ENCODE measurements at regions of chr1 and their contacts with region 1.

Region 1: GRCh38 chr1:54488779-54489626 is 59.0 kb upstream of the ACOT11 start:
- DNase-seq: peak; percentile 90

Region 2: DNA sequence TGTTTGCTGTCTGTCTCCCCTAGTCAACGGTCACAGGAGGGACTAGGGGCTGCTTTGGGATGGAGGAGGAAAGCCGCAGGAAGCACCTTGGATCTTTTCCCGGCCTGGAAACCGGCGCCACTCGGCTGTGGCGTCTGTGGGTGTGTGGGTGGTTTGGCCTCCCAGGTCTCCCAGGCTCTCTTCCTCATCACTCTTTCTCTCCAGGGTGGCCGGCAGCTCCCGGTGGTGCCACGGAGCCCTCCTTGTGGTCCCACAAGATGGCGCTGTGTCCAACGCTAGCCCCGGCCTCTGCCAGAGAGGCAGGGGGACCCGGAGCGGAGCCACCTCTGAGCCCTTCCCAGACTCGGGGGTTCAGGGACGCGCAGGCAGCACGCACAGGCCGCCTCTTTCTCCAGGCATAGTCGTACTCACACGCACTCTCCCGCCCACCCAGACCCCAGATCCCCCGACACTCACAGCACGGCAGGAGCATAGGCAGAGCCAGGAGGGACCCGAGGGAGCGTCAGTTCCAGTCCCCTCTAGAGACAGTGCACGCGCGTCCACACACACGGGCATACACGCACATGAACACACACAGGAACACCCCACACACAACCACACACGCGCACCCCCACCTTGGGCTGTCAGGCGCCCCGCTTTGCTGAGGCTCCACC is 367.4 kb before region 1 on chr1:
- intact Hi-C with region 1: loop called (anchors 1 kb)
- DNase-seq: no peak

Region 3: DNA sequence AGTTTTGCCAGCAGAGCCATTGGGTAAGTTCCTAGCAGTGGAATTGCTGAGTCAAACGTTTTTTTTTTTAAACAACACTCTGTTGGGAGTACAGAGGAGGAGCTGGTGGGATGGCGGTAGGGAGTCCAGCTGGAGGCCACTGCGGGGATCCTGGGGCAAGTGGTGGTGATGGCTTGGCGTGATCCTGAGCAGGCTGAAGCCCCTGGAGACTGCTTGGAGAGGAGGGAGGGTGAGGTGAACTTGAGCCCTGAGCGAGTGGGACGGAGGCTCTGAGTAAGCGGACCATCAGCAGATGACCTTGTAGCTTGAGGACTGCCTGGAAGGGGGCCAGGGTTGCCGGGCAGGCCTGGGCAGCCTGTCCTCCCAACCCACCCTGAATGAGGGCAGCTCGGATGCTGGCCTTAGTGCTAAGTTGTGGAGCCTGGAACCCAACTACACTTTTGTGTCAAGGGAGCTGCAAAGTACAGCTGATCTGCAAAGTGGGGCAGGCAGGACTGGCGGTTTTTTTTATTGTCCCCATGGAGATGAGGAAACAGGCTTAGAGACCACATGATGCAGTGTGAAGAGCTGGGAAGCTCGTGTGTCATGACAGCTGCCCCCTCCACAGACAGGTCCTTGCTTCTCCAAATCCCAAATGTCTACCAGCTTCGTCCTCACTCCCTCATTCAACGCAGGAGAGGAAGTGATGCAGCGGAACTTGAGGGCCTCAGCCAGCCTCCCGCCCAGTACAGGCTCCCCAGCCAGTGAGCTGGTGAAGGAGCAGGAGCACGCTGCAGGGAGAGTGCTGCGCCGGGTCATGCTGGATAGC is 268.8 kb before region 1 on chr1:
- intact Hi-C with region 1: loop called (anchors 1 kb)
- DNase-seq: peak; percentile 82

Region 4: GRCh38 chr1:54287176-54287650 is 201.8 kb before region 1 on chr1:
- intact Hi-C with region 1: loop called (anchors 5 kb)
- DNase-seq: peak; percentile 83

Region 5: DNA sequence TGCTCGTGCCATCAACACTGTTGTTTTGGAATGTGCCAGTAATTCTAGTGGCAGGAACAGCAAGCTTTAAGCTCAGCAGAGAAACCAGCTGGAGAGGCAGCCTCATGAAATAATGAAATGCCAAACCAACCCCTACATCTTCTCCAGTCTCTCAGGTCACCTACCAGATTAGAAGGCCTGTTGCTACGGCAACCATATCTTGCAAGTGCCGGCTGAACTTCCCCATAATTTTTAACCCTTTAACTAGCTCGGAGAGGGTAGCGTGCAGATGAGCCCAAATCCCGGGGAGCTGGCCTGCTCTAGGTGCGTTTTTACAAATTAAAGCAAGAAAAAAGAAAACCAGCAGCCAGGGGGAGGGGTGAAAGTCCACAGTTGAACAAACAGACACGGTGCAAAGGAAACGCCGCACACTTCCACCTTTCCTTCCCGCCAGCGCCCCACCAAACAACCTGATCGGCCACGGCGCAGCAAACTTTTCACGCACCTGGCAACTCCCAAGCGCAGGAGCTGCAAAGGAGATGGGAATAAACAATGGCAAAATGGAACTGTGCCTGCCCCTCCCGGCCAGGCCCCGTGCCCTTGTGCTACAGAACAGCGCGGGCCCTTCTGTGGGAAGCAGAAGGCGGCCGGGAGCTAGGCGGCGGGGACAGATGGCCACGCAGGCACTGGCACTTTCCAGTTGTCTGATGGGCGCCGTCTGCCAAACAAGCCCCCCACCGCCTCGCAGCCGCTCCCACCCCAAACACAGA is 132.9 kb before region 1 on chr1:
- intact Hi-C with region 1: loop called (anchors 2 kb)
- DNase-seq: no peak

Region 6: GRCh38 chr1:54547601-54548388 is 58.8 kb after region 1 on chr1 and contains the start of gene ACOT11:
- intact Hi-C with region 1: loop called (anchors 5 kb)
- DNase-seq: peak; percentile 93
- total RNA-seq, gene ACOT11: 44.1 TPM